Right cardiac atrium (tissue), 5 donors: ENCODE measurements at regions of chr10 and their contacts with region 1.

Region 1: DNA sequence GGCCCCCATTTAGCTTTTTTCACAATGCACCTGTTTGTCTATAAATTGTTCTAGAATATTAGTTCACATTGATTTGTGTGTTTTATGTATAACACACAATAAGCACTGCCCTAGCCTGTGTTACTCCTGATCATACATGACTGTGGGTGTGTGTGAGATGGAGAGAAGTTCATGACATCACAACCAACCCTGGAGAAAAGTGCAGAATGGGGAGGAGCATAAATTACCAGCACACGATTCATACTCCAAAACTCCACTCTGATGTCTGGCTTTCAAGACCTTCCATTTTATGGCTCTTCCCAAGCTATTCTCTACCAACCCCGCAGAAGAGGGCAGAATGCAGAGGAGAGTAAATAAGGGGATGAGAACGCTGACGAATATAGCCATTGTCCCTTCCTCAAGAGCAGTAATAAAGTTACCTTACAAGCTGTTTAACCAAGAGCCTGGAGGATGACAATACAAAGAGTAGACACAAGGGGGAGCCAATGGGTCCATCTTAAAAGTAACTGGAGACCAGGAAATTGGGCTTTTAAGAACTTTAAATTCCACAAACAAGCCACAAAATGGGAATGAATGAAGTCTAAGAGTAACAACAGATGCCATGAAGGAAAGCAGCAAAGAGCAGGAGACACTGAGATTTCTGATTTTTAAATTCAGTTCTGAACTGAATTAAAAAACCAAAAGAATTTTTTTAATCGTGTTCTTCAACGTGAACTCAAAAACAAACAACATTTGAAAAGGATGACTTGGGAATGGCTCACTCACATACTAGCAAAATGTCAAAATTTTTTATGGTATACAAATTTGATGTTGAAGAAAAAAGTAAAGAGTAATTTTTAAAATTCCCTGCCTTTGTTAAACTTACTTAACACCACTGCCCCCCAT is 159.6 kb downstream of the PARD3 start:
- DNase-seq: no peak
- ATAC-seq: no peak
- H3K4me3 ChIP-seq: no peak overlapping the region
- H3K27ac ChIP-seq: no peak overlapping the region
- H3K4me1 ChIP-seq: peaks cover 2% of the 10 kb centered on the region
- H3K27me3 ChIP-seq: no peaks in the 10 kb centered on the region

Region 2: GRCh38 chr10:34960983-34961382 is 305.5 kb after region 1 on chr10:
- intact Hi-C with region 1: loop called in 1 of 4 experiments (anchors 10 kb)
- DNase-seq: no peak
- ATAC-seq: peak; percentile 49 to 84
- H3K4me3 ChIP-seq: no peak overlapping the region
- H3K27ac ChIP-seq: no peak overlapping the region
- H3K4me1 ChIP-seq: no peaks in the 10 kb centered on the region
- H3K27me3 ChIP-seq: no peaks in the 10 kb centered on the region

Region 3: GRCh38 chr10:35726846-35727245 is 1071.3 kb after region 1 on chr10:
- intact Hi-C with region 1: no loop called
- DNase-seq: no peak
- ATAC-seq: no peak
- H3K4me3 ChIP-seq: no peak overlapping the region
- H3K27ac ChIP-seq: no peak overlapping the region
- H3K4me1 ChIP-seq: no peaks in the 10 kb centered on the region
- H3K27me3 ChIP-seq: no peaks in the 10 kb centered on the region